GM13977 (cell line): ENCODE measurements at regions of chr12 and their contacts with region 1.

Region 1: GRCh38 chr12:25130741-25131188 is 64.2 kb downstream of the DNAI7 start:
- DNase-seq: peak; percentile 41
- CTCF ChIP-seq: peak; percentile 41

Region 2: GRCh38 chr12:24838531-24838950 is 292.2 kb before region 1 on chr12:
- in situ Hi-C with region 1: loop called (anchors 25 kb)
- DNase-seq: no peak
- CTCF ChIP-seq: no peak

Region 3: GRCh38 chr12:24991209-24992049 is 139.3 kb before region 1 on chr12:
- in situ Hi-C with region 1: loop called (anchors 5 kb)
- DNase-seq: peak; percentile 57
- CTCF ChIP-seq: peak; percentile 58

Region 4: DNA sequence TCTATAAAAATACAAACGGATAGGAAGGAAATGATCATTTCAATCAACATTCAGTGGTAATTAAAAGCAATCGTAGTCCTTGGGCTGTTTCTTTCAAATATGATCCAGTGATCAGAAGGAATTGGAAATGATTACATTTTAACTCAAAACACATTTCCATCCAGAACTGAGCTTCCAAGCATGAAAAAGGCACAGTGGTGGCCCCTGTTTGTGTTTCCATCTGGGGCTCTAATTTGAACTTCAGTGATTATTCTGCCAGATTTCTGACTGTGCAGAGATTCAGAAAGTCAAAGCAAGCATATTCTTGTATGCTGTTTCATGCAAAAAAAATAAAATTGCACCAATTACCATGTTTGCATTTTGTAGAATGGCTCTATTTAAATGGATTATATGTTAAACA is 579.4 kb after region 1 on chr12:
- in situ Hi-C with region 1: no loop called
- DNase-seq: no peak
- CTCF ChIP-seq: no peak